Left colon (tissue), 2 donors: ENCODE measurements at regions of chr12 and their contacts with region 1.

Region 1: GRCh38 chr12:9039397-9039977 is 50.1 kb downstream of the KLRG1 start:
- DNase-seq: no peak
- ATAC-seq: peak; percentile 57

Region 2: GRCh38 chr12:8949342-8950220 is 89.9 kb before region 1 on chr12 and contains the start of gene M6PR:
- intact Hi-C with region 1: loop called in 1 of 2 experiments (anchors 5 kb)
- DNase-seq: peak; percentile 95
- ATAC-seq: peak; percentile 92
- total RNA-seq, gene M6PR: 90.3 to 96.1 TPM

Region 3: DNA sequence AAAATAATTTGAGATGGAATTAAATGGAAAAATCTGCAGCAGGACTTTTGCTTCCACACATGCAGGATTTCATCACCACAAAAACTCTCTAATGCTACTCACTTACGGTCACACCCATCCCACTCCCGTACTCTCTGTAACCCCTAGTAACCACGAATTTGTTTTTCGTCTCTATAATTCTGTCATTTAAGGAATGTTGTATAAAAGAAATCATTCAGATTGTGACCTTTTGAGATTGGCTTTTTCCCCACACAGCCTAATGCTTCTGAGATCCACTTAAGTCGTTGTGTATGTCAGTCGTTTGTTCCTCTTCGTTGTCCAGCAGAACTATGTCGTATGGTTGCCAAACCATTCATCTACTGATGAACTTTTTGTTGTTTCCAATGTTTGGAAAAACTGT is 188.5 kb after region 1 on chr12:
- intact Hi-C with region 1: no loop called
- DNase-seq: no peak
- ATAC-seq: no peak